ENCODE measurements at regions of chr6 and their contacts with region 1.

Region 1: DNA sequence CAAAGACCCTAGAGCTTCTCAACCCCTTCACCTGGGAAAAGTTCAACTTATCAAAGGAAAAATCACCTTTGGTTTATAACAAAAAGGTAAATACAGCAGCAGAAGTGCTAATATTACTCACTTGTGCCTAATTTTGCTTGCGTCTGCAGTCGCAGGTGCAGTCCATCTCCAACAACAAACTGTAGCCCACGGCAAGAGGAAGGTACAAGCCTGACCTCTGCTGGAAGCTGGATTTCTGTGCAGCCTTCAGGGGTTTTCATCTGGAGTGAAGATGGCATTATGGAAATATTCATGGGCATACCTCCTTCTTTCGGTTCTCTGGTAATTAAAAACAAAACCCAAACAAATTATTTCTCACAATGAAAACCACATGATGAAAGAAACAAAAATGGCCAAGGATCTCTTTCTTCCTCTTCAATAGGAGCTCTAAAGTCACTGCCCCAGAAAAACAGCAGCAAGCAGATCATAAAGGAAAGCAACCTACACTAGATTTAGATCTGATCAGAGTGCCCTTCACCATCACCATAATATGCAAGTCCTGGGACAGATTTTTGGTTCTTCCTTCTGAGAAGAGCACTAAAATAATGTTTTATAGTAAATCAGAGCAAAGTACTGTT is 7.8 kb downstream of the UBE3D start:
- DNase-seq: peak; percentile 30
- H3K4me3 ChIP-seq: no peak overlapping the region
- H3K27ac ChIP-seq: no peak overlapping the region
- H3K4me1 ChIP-seq: no peaks in the 10 kb centered on the region
- H3K27me3 ChIP-seq: no peaks in the 10 kb centered on the region
- CTCF ChIP-seq: peak; percentile 18 to 61 (median 54)
- POLR2A ChIP-seq: no peak

Region 2: GRCh38 chr6:82251942-82252341 is 805.9 kb before region 1 on chr6:
- intact Hi-C with region 1: loop called (anchors 5 kb)
- DNase-seq: no peak
- H3K4me3 ChIP-seq: no peak overlapping the region
- H3K27ac ChIP-seq: no peak overlapping the region
- H3K4me1 ChIP-seq: no peaks in the 10 kb centered on the region
- H3K27me3 ChIP-seq: no peaks in the 10 kb centered on the region
- CTCF ChIP-seq: peak in 3 of 4 experiments; percentile 25 to 52 (median 48)
- POLR2A ChIP-seq: no peak

Region 3: GRCh38 chr6:82270881-82271645 is 786.8 kb before region 1 on chr6:
- intact Hi-C with region 1: loop called (anchors 5 kb)
- DNase-seq: no peak
- H3K4me3 ChIP-seq: no peak overlapping the region
- H3K27ac ChIP-seq: no peak overlapping the region
- H3K4me1 ChIP-seq: no peaks in the 10 kb centered on the region
- H3K27me3 ChIP-seq: no peaks in the 10 kb centered on the region
- CTCF ChIP-seq: peak; percentile 16 to 62 (median 55)
- POLR2A ChIP-seq: no peak

Region 4: DNA sequence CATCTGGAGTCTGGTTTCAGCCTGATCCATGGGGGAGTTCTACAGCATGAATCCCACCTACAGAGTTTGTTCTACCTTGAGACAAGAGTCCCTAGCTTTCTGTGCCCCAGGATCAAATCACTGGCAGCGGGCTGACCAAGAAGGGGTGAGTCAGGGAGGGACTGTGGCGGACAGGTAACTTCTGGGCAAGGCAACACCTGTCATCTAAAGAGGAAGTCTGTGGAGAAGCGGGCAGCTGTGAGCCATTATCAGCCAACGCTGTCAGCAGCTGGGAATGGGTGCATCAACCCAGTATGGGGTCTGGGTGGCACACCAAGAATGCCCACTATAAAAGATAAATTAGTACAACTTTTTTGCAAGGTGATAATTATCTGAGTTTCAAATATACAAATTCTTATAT is 38.1 kb before region 1 on chr6:
- intact Hi-C with region 1: no loop called
- DNase-seq: no peak
- H3K4me3 ChIP-seq: no peak overlapping the region
- H3K27ac ChIP-seq: no peak overlapping the region
- H3K4me1 ChIP-seq: no peaks in the 10 kb centered on the region
- H3K27me3 ChIP-seq: no peaks in the 10 kb centered on the region
- CTCF ChIP-seq: no peak
- POLR2A ChIP-seq: no peak

Region 5: GRCh38 chr6:83086751-83087150 is 28.9 kb after region 1 on chr6:
- intact Hi-C with region 1: no loop called
- DNase-seq: no peak
- H3K4me3 ChIP-seq: no peak overlapping the region
- H3K27ac ChIP-seq: no peak overlapping the region
- H3K4me1 ChIP-seq: no peaks in the 10 kb centered on the region
- H3K27me3 ChIP-seq: no peaks in the 10 kb centered on the region
- CTCF ChIP-seq: no peak
- POLR2A ChIP-seq: no peak